Heart left ventricle (tissue), 16 donors: ENCODE measurements at regions of chr10 and their contacts with region 1.

Region 1: GRCh38 chr10:32256613-32257437 is 90.1 kb downstream of the EPC1 start:
- DNase-seq: peak; percentile 44 to 76 (median 58)
- ATAC-seq: peak; percentile 37 to 83 (median 68)
- H3K4me3 ChIP-seq: peak overlapping the region in 1 of 12 donors; percentile 20
- H3K27ac ChIP-seq: no peak overlapping the region
- H3K4me1 ChIP-seq: peaks cover 0 to 8% (median 0%) of the 10 kb centered on the region in 12 donors
- H3K27me3 ChIP-seq: no peaks in the 10 kb centered on the region
- CTCF ChIP-seq: peak; percentile 83 to 94 (median 87)
- POLR2A ChIP-seq: no peak

Region 2: GRCh38 chr10:32315424-32315823 is 58.6 kb after region 1 on chr10:
- intact Hi-C with region 1: no loop called
- DNase-seq: no peak
- ATAC-seq: no peak
- H3K4me3 ChIP-seq: no peak overlapping the region
- H3K27ac ChIP-seq: no peak overlapping the region
- H3K4me1 ChIP-seq: peaks cover 24 to 93% (median 83%) of the 10 kb centered on the region in 12 donors
- H3K27me3 ChIP-seq: no peaks in the 10 kb centered on the region
- CTCF ChIP-seq: no peak
- POLR2A ChIP-seq: no peak

Region 3: GRCh38 chr10:32338262-32338661 is 81.4 kb after region 1 on chr10:
- intact Hi-C with region 1: loop called in 2 of 10 experiments (anchors 5 kb)
- DNase-seq: no peak
- ATAC-seq: no peak
- H3K4me3 ChIP-seq: no peak overlapping the region
- H3K27ac ChIP-seq: no peak overlapping the region
- H3K4me1 ChIP-seq: peaks cover 3 to 99% (median 91%) of the 10 kb centered on the region in 12 donors
- H3K27me3 ChIP-seq: no peaks in the 10 kb centered on the region
- CTCF ChIP-seq: no peak
- POLR2A ChIP-seq: no peak

Region 4: GRCh38 chr10:32360243-32360642 is 103.4 kb after region 1 on chr10:
- intact Hi-C with region 1: loop called in 4 of 10 experiments (anchors 5 kb)
- DNase-seq: no peak
- ATAC-seq: no peak
- H3K4me3 ChIP-seq: no peak overlapping the region
- H3K27ac ChIP-seq: no peak overlapping the region
- H3K4me1 ChIP-seq: peaks cover 0 to 17% (median 9%) of the 10 kb centered on the region in 12 donors
- H3K27me3 ChIP-seq: no peaks in the 10 kb centered on the region
- CTCF ChIP-seq: no peak
- POLR2A ChIP-seq: no peak

Region 5: GRCh38 chr10:32367793-32368453 is 111.1 kb after region 1 on chr10:
- intact Hi-C with region 1: loop called in 8 of 10 experiments (anchors 1 to 5 kb)
- DNase-seq: peak; percentile 62 to 80 (median 69)
- ATAC-seq: peak in 3 of 4 donors; percentile 38 to 53 (median 40)
- H3K4me3 ChIP-seq: peak overlapping the region in 7 of 12 donors; percentile 3 to 43 (median 26)
- H3K27ac ChIP-seq: peak overlapping the region in 7 of 12 donors; percentile 13 to 73 (median 28)
- H3K4me1 ChIP-seq: peaks cover 0 to 64% (median 33%) of the 10 kb centered on the region in 12 donors
- H3K27me3 ChIP-seq: no peaks in the 10 kb centered on the region
- CTCF ChIP-seq: peak; percentile 66 to 88 (median 80)
- POLR2A ChIP-seq: no peak